Activated naive CD4-positive, alpha-beta T cell treated with anti-CD3 and anti-CD28 coated beads for 36 hours (primary cell): ENCODE measurements at regions of chr19 and their contacts with region 1.

Region 1: GRCh38 chr19:45643024-45643926 is 4.1 kb upstream of the EML2 start:
- DNase-seq: peak; percentile 98
- H3K4me3 Mint-ChIP-seq: peak overlapping the region; percentile 65
- H3K27ac Mint-ChIP-seq: peak overlapping the region; percentile 99
- H3K4me1 Mint-ChIP-seq: peaks cover 46% of the 10 kb centered on the region
- H3K27me3 Mint-ChIP-seq: peaks cover 3% of the 10 kb centered on the region

Region 2: GRCh38 chr19:45485305-45486077 is 157.8 kb before region 1 on chr19:
- CTCF ChIA-PET with region 1: interaction called, 10 read pairs
- intact Hi-C with region 1: loop called (anchors 1 kb)
- DNase-seq: peak; percentile 99
- H3K4me3 Mint-ChIP-seq: peak overlapping the region; percentile 81
- H3K27ac Mint-ChIP-seq: peak overlapping the region; percentile 46
- H3K4me1 Mint-ChIP-seq: peaks cover 4% of the 10 kb centered on the region
- H3K27me3 Mint-ChIP-seq: no peaks in the 10 kb centered on the region

Region 3: DNA sequence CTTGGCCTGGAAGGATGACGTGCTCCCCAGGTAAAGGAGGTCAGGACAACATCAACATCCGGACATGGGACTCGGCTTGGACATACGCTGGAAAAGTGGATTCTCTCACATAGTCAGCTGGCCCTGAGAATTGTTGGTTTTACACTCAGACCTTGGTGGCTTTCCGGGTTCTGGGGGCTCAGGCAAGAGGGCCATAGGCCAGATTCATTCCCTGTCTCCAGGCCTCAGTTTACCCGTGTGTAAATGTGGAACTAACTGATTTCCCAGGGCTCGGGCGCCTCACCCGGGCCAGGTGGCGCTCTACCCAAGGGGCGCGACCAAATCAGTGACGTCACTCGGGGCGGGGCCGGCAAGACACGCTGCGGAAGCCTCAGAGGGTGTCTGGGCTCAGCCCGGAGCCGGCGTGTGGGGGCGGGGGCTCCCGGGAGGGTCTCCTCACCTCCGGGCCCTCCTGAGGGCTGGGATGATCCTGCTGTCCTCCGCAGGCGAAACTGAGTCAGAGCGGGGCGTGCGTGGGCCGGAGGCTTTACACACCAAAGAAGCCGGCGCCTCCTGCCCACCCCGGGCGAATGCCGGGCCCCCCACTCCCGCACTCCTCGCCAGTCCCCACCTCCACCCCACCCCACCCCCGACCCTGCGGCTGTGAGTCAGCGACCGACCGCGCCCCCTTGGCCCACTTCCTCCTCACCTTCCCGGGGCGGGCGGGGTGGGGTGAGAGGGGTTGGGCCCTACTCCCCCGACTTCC is 136.9 kb before region 1 on chr19:
- CTCF ChIA-PET with region 1: interaction called, 6 read pairs
- intact Hi-C with region 1: loop called (anchors 1 kb)
- DNase-seq: peak; percentile 99
- H3K4me3 Mint-ChIP-seq: peak overlapping the region; percentile 86
- H3K27ac Mint-ChIP-seq: peak overlapping the region; percentile 94
- H3K4me1 Mint-ChIP-seq: peaks cover 39% of the 10 kb centered on the region
- H3K27me3 Mint-ChIP-seq: no peaks in the 10 kb centered on the region

Region 4: GRCh38 chr19:45558399-45558878 is 84.8 kb before region 1 on chr19:
- CTCF ChIA-PET with region 1: interaction called, 3 read pairs
- intact Hi-C with region 1: loop called (anchors 1 kb)
- DNase-seq: peak; percentile 88
- H3K4me3 Mint-ChIP-seq: no peak overlapping the region
- H3K27ac Mint-ChIP-seq: no peak overlapping the region
- H3K4me1 Mint-ChIP-seq: peaks cover 30% of the 10 kb centered on the region
- H3K27me3 Mint-ChIP-seq: no peaks in the 10 kb centered on the region

Region 5: DNA sequence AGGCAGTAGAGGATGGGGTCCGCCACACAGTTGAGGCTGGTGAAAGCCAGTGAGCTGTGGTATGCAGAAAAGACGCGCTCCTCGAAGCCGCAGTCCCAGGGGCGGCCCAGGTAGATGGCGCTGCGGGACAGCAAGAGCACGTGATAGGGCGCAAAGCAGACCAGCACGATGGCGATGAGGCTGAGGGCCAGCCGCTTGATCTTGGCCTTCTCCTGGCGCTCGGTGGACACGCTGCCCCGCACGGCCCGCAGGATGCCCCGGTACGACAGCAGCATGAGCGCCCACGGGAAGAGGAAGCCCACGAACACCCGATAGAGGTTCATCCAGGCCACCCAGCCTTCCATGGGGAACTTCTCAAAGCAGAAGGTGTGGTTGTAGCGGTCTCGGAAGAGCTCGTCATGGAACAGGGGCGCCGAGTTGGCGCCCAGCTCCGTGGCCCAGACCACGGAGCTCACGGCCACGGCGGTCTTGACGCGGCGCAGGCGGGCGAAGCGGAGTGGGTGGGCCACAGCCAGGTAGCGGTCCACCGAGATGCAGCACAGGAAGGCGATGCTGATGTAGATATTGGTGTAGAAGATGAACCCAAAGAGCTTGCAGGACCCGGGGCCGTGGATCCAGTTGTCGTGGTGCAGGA is 52.2 kb before region 1 on chr19:
- CTCF ChIA-PET with region 1: interaction called, 15 read pairs
- intact Hi-C with region 1: loop called (anchors 1 kb)
- DNase-seq: peak; percentile 74
- H3K4me3 Mint-ChIP-seq: no peak overlapping the region
- H3K27ac Mint-ChIP-seq: no peak overlapping the region
- H3K4me1 Mint-ChIP-seq: peaks cover 13% of the 10 kb centered on the region
- H3K27me3 Mint-ChIP-seq: peaks cover 37% of the 10 kb centered on the region

Region 6: GRCh38 chr19:45613926-45614725 is 29.1 kb before region 1 on chr19:
- CTCF ChIA-PET with region 1: interaction called, 27 read pairs
- intact Hi-C with region 1: loop called (anchors 1 kb)
- DNase-seq: peak; percentile 75
- H3K4me3 Mint-ChIP-seq: no peak overlapping the region
- H3K27ac Mint-ChIP-seq: peak overlapping the region; percentile 91
- H3K4me1 Mint-ChIP-seq: peaks cover 23% of the 10 kb centered on the region
- H3K27me3 Mint-ChIP-seq: no peaks in the 10 kb centered on the region

Region 7: GRCh38 chr19:45657520-45658167 is 14.4 kb after region 1 on chr19:
- CTCF ChIA-PET with region 1: no interaction called
- intact Hi-C with region 1: no loop called
- DNase-seq: no peak
- H3K4me3 Mint-ChIP-seq: no peak overlapping the region
- H3K27ac Mint-ChIP-seq: no peak overlapping the region
- H3K4me1 Mint-ChIP-seq: no peaks in the 10 kb centered on the region
- H3K27me3 Mint-ChIP-seq: no peaks in the 10 kb centered on the region

Region 8: GRCh38 chr19:45670670-45671453 is 27.6 kb after region 1 on chr19:
- CTCF ChIA-PET with region 1: interaction called, 4 read pairs
- intact Hi-C with region 1: loop called (anchors 1 kb)
- DNase-seq: peak; percentile 78
- H3K4me3 Mint-ChIP-seq: peak overlapping the region; percentile 41
- H3K27ac Mint-ChIP-seq: no peak overlapping the region
- H3K4me1 Mint-ChIP-seq: peaks cover 36% of the 10 kb centered on the region
- H3K27me3 Mint-ChIP-seq: peaks cover 20% of the 10 kb centered on the region